Heart right ventricle (tissue), 16 donors: ENCODE measurements at regions of chr18 and their contacts with region 1.

Region 1: GRCh38 chr18:70337139-70337972 is 48.5 kb downstream of the SOCS6 start:
- DNase-seq: peak in 1 of 2 donors; percentile 49
- ATAC-seq: peak; percentile 83 to 96 (median 90)
- H3K4me3 ChIP-seq: peak overlapping the region in 2 of 10 donors; percentile 4 to 12
- H3K27ac ChIP-seq: peak overlapping the region in 8 of 10 donors; percentile 7 to 85 (median 60)
- H3K4me1 ChIP-seq: peaks cover 0 to 29% (median 0%) of the 10 kb centered on the region in 9 donors
- H3K27me3 ChIP-seq: no peaks in the 10 kb centered on the region
- CTCF ChIP-seq: no peak

Region 2: GRCh38 chr18:70288851-70289328 is 48.5 kb before region 1 on chr18 and contains the start of gene SOCS6:
- intact Hi-C with region 1: loop called in 3 of 10 experiments (anchors 5 kb)
- DNase-seq: peak; percentile 59 to 77
- ATAC-seq: peak; percentile 30 to 82 (median 64)
- H3K4me3 ChIP-seq: peak within 1 kb of the TSS; percentile 57 to 95 (median 73)
- H3K27ac ChIP-seq: peak within 1 kb of the TSS; percentile 82 to 94 (median 90)
- H3K4me1 ChIP-seq: peaks cover 5 to 68% (median 39%) of the 10 kb centered on the region in 9 donors
- H3K27me3 ChIP-seq: no peaks in the 10 kb centered on the region
- CTCF ChIP-seq: no peak
- total RNA-seq, gene SOCS6: 17.0 to 31.8 (median 21.2) TPM

Region 3: GRCh38 chr18:70296289-70296688 is 41.1 kb before region 1 on chr18:
- intact Hi-C with region 1: loop called in 3 of 10 experiments (anchors 5 kb)
- DNase-seq: peak; percentile 21 to 47
- ATAC-seq: peak; percentile 74 to 86 (median 80)
- H3K4me3 ChIP-seq: peak overlapping the region in 3 of 10 donors; percentile 15 to 18 (median 17)
- H3K27ac ChIP-seq: peak overlapping the region in 8 of 10 donors; percentile 17 to 81 (median 38)
- H3K4me1 ChIP-seq: peaks cover 7 to 92% (median 59%) of the 10 kb centered on the region in 9 donors
- H3K27me3 ChIP-seq: no peaks in the 10 kb centered on the region
- CTCF ChIP-seq: no peak

Region 4: DNA sequence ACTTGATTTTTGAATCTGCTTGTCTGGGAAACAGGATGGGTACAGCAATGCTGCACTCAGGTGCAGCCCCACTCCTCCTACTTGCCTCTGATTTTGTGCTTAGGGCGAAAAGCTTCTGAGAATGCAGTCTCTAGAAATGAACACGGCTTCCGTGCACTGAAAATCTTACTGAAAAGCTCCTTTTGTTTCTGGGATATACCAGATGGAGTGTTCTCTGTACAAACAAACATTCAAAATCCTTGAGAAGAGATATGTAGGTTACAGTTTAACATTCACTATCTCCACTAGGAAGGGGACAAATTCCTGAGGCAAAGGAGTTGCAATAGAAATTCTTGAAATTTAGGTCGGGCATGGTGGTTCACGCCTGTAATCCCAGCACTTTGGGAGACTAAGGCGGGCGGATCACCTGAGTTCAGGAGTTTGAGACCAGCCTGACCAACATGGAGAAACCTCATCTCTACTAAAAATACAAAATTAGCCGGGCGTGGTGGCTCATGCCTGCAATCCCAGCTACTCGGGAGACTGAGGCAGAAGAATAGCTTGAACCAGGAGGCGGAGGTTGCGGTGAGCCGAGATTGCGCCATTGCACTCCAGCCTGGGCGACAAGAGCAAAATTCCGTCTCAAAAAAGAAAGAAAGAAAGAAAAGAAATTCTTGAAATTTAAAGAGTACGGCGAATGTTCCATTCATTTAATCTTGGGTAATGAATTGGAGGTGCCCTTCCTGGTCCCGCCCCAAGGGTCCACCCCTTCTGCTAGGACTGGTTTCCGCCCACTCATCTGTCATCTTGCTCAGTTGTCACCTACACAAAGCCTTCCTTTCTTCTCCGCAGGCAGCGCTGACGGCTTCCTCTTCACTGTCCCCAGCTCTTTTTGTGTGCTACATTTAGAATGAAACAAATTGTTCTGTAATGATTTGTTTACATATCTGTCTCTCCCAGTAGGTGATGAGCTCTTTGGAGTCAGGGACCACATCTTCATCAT is 43.9 kb after region 1 on chr18:
- intact Hi-C with region 1: no loop called
- DNase-seq: peak; percentile 16 to 17
- ATAC-seq: peak in 7 of 8 donors; percentile 28 to 91 (median 64)
- H3K4me3 ChIP-seq: no peak overlapping the region
- H3K27ac ChIP-seq: no peak overlapping the region
- H3K4me1 ChIP-seq: peaks cover 0 to 5% (median 0%) of the 10 kb centered on the region in 9 donors
- H3K27me3 ChIP-seq: no peaks in the 10 kb centered on the region
- CTCF ChIP-seq: no peak

Region 5: GRCh38 chr18:70442933-70443332 is 105.6 kb after region 1 on chr18:
- intact Hi-C with region 1: no loop called
- DNase-seq: no peak
- ATAC-seq: no peak
- H3K4me3 ChIP-seq: no peak overlapping the region
- H3K27ac ChIP-seq: no peak overlapping the region
- H3K4me1 ChIP-seq: no peaks in the 10 kb centered on the region
- H3K27me3 ChIP-seq: no peaks in the 10 kb centered on the region
- CTCF ChIP-seq: no peak